ENCODE measurements at regions of chr11 and their contacts with region 1.

Region 1: GRCh38 chr11:69272831-69273485 is 21.0 kb upstream of the MYEOV start:
- DNase-seq: no peak
- ATAC-seq: no peak
- H3K4me3 ChIP-seq: no peak overlapping the region
- H3K27ac ChIP-seq: no peak overlapping the region
- H3K4me1 ChIP-seq: peaks cover 13% of the 10 kb centered on the region
- H3K27me3 ChIP-seq: no peaks in the 10 kb centered on the region
- CTCF ChIP-seq: no peak

Region 2: GRCh38 chr11:69122642-69123431 is 150.1 kb before region 1 on chr11:
- CTCF ChIA-PET with region 1: no interaction called
- POLR2A ChIA-PET with region 1: interaction called, 10 read pairs
- in situ Hi-C with region 1: no loop called
- intact Hi-C with region 1: no loop called
- DNase-seq: peak; percentile 64
- ATAC-seq: peak; percentile 95
- H3K4me3 ChIP-seq: peak overlapping the region; percentile 9 to 44; a peak in 3 of 4 replicates
- H3K27ac ChIP-seq: peak overlapping the region; percentile 94
- H3K4me1 ChIP-seq: peaks cover 61% of the 10 kb centered on the region
- H3K27me3 ChIP-seq: no peaks in the 10 kb centered on the region
- CTCF ChIP-seq: no peak

Region 3: DNA sequence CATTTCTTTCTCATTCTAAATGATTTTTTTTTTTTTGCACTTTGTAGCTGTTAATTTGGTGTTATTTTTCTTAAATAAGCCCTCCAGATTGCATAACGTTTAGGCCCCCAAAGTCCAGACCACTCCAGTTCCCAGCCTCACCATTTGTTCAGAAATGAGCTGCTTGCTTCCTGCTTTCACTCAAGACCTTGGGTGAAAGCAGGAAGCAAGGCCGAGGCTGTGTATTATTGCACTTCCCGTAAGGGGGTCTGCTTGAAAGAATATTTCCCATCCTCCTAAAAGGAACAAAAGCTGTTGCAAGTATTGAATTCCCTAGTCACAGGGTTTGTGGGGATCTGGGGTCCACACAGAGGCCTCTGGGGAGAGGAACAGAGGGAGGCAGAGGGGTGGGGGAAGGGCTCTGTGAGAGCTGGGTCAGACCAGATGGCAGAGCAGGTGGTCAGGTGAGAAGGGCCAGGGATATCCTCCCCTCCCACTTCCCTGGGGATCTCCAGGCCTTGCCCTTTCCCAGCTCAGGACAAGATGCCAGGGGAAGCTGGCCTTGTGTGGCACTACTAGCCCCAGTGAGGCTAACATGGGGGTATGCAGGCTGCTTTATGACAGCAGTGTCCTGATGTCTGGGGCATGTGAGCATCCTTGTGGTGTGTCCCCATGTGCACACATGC is 30.6 kb before region 1 on chr11:
- CTCF ChIA-PET with region 1: interaction called, 15 read pairs
- POLR2A ChIA-PET with region 1: interaction called, 3 read pairs
- in situ Hi-C with region 1: no loop called
- intact Hi-C with region 1: no loop called
- DNase-seq: no peak
- ATAC-seq: no peak
- H3K4me3 ChIP-seq: no peak overlapping the region
- H3K27ac ChIP-seq: no peak overlapping the region
- H3K4me1 ChIP-seq: no peaks in the 10 kb centered on the region
- H3K27me3 ChIP-seq: no peaks in the 10 kb centered on the region
- CTCF ChIP-seq: no peak